Prostate gland (tissue), 2 donors: ENCODE measurements at regions of chr2 and their contacts with region 1.

Region 1: DNA sequence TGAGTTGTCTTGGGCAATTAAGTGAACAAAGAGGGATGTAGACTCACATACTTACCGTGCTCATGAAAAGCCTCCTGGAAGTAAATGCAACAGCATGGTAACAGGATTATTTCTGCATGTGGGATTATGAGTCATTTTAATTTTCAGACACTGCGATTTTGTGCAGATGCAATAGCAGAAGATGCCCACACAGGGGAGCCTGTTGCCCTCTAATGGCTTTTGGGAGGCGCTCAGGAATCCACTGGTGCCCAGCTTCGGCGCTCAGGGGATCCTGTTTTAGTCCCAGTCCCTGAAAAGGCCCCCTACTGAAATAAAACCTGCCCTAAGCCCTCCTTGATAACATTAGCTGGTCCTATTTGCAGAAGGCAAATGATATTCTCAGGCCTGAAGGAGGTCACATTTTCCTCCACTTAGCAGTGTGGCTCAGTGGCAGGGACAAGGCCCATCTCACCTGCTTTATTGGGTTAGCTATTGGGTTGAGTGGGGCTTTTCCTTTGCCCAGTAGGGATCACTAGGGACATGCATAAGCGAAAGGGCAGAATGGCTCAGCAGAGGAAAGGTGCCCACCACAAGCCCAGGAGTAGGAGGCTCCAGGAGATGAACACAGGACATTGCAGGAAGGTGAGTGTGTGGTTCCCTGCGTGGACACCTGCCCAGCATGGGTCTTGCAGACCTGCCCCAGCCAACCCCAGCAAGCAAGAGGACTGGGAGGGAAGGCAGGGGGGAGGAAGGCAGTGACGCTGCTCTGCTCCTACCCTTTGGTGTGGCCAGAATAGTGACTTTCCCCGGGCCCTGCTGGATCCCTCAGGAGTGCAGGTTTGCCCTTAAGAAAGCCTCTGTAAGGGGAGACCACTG is 26.5 kb upstream of the KCNS3 start:
- DNase-seq: peak; percentile 38
- H3K4me3 ChIP-seq: no peak overlapping the region
- H3K27ac ChIP-seq: no peak overlapping the region
- H3K4me1 ChIP-seq: no peaks in the 10 kb centered on the region
- H3K27me3 ChIP-seq: no peaks in the 10 kb centered on the region
- CTCF ChIP-seq: peak; percentile 22 to 88 (median 77)
- POLR2A ChIP-seq: no peak

Region 2: GRCh38 chr2:17706845-17707244 is 145.1 kb before region 1 on chr2:
- intact Hi-C with region 1: no loop called
- DNase-seq: no peak
- H3K4me3 ChIP-seq: no peak overlapping the region
- H3K27ac ChIP-seq: no peak overlapping the region
- H3K4me1 ChIP-seq: no peaks in the 10 kb centered on the region
- H3K27me3 ChIP-seq: no peaks in the 10 kb centered on the region
- CTCF ChIP-seq: no peak
- POLR2A ChIP-seq: no peak

Region 3: GRCh38 chr2:17981936-17982335 is 130.0 kb after region 1 on chr2:
- intact Hi-C with region 1: no loop called
- DNase-seq: no peak
- H3K4me3 ChIP-seq: no peak overlapping the region
- H3K27ac ChIP-seq: no peak overlapping the region
- H3K4me1 ChIP-seq: no peaks in the 10 kb centered on the region
- H3K27me3 ChIP-seq: no peaks in the 10 kb centered on the region
- CTCF ChIP-seq: no peak
- POLR2A ChIP-seq: no peak

Region 4: GRCh38 chr2:18149645-18150246 is 297.8 kb after region 1 on chr2:
- intact Hi-C with region 1: loop called (anchors 5 kb)
- DNase-seq: no peak
- H3K4me3 ChIP-seq: no peak overlapping the region
- H3K27ac ChIP-seq: no peak overlapping the region
- H3K4me1 ChIP-seq: no peaks in the 10 kb centered on the region
- H3K27me3 ChIP-seq: no peaks in the 10 kb centered on the region
- CTCF ChIP-seq: peak in 3 of 4 experiments; percentile 64 to 66 (median 64)
- POLR2A ChIP-seq: no peak